GM12878 (cell line): ENCODE measurements at regions of chr21 and their contacts with region 1.

Region 1: DNA sequence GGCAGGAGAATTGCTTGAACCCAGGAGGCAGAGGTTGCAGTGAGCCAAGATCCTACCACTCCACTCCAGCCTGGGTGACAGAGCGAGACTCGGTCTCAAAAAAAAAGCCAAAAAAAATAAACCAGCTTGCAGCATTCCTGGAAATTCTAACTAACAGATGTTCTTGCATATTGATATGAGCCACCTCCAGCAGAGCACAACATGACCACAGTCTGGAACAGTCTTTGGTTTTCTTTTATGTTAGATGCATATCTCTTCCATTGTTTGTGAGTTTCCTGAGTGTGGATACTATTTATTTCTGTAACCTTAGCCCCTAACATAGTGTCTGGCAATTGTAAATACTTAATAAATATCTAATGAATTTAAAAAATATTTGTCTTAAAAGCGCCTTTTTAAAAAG is 23.9 kb downstream of the IFNAR1 start:
- DNase-seq: no peak
- ATAC-seq: no peak
- H3K4me3 ChIP-seq: no peak overlapping the region
- H3K27ac ChIP-seq: no peak overlapping the region
- H3K4me1 ChIP-seq: no peaks in the 10 kb centered on the region
- H3K27me3 ChIP-seq: no peaks in the 10 kb centered on the region
- CTCF ChIP-seq: no peak
- EP300 ChIP-seq: no peak
- POLR2A ChIP-seq: no peak
- RAD21 ChIP-seq: no peak

Region 2: GRCh38 chr21:33332143-33332542 is 16.6 kb before region 1 on chr21:
- CTCF ChIA-PET with region 1: interaction called, 18 read pairs
- POLR2A ChIA-PET with region 1: interaction called, 4 read pairs
- RAD21 ChIA-PET with region 1: interaction called, 4 read pairs
- SMC1A ChIA-PET with region 1: interaction called, 8 read pairs
- in situ Hi-C with region 1: no loop called
- intact Hi-C with region 1: no loop called
- DNase-seq: no peak
- ATAC-seq: peak; percentile 83
- H3K4me3 ChIP-seq: peak overlapping the region; percentile 0; the same call in 1 of the 2 replicates
- H3K27ac ChIP-seq: peak overlapping the region; percentile 82
- H3K4me1 ChIP-seq: peaks cover 29% of the 10 kb centered on the region
- H3K27me3 ChIP-seq: no peaks in the 10 kb centered on the region
- CTCF ChIP-seq: no peak
- EP300 ChIP-seq: no peak
- POLR2A ChIP-seq: peak; percentile 17; the same call in 1 of the 2 replicates
- RAD21 ChIP-seq: 0 out of 2 replicates have a peak, but pooled peaks have one; percentile 1

Region 3: DNA sequence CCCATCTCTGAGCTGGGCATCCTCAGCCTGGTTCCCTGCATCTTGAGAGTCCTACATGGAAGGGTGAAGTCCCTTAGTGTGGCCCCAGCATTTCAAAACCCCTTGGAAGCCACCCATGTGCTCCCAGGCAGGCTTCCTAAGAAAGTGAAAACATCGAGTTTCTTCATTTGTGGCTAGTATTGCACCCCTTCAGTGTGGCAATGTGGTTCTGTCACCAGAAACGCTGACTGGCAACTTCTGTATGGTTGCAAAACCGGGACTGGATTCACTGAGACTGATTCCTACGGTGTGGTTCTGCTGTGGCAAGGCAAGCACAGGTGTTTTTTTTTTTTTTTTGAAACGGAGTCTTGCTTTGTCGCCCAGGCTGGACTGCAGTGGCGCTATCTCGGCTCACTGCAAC is 45.6 kb after region 1 on chr21:
- CTCF ChIA-PET with region 1: no interaction called
- POLR2A ChIA-PET with region 1: no interaction called
- RAD21 ChIA-PET with region 1: no interaction called
- SMC1A ChIA-PET with region 1: no interaction called
- in situ Hi-C with region 1: no loop called
- intact Hi-C with region 1: no loop called
- DNase-seq: no peak
- ATAC-seq: peak; percentile 81
- H3K4me3 ChIP-seq: no peak overlapping the region
- H3K27ac ChIP-seq: no peak overlapping the region
- H3K4me1 ChIP-seq: peaks cover 12% of the 10 kb centered on the region
- H3K27me3 ChIP-seq: no peaks in the 10 kb centered on the region
- CTCF ChIP-seq: no peak
- EP300 ChIP-seq: no peak
- POLR2A ChIP-seq: no peak
- RAD21 ChIP-seq: no peak

Region 4: DNA sequence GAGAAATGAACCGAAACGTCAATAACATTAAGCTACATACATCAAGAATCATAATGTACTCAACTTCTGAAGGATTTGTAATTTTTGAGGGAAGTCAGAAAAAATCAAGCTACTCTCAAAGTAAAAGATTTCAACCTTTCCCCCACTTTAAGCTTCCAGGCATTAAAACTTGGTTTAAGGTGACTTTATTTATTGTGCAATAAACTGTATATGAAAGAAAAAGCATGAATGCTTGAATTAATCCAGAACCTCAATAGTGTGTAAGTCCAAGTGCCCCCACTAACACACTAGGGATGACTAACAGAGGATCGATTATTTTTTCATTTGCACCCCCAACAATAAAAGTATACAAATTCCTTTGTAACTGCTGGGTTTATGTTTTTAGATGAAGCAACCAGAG is 182.3 kb after region 1 on chr21:
- CTCF ChIA-PET with region 1: no interaction called
- POLR2A ChIA-PET with region 1: no interaction called
- RAD21 ChIA-PET with region 1: no interaction called
- SMC1A ChIA-PET with region 1: no interaction called
- in situ Hi-C with region 1: no loop called
- intact Hi-C with region 1: no loop called
- DNase-seq: no peak
- ATAC-seq: no peak
- H3K4me3 ChIP-seq: no peak overlapping the region
- H3K27ac ChIP-seq: no peak overlapping the region
- H3K4me1 ChIP-seq: no peaks in the 10 kb centered on the region
- H3K27me3 ChIP-seq: no peaks in the 10 kb centered on the region
- CTCF ChIP-seq: no peak
- EP300 ChIP-seq: no peak
- POLR2A ChIP-seq: no peak
- RAD21 ChIP-seq: no peak